Sciatic nerve (tissue), 2 donors: ENCODE measurements at regions of chr20 and their contacts with region 1.

Region 1: DNA sequence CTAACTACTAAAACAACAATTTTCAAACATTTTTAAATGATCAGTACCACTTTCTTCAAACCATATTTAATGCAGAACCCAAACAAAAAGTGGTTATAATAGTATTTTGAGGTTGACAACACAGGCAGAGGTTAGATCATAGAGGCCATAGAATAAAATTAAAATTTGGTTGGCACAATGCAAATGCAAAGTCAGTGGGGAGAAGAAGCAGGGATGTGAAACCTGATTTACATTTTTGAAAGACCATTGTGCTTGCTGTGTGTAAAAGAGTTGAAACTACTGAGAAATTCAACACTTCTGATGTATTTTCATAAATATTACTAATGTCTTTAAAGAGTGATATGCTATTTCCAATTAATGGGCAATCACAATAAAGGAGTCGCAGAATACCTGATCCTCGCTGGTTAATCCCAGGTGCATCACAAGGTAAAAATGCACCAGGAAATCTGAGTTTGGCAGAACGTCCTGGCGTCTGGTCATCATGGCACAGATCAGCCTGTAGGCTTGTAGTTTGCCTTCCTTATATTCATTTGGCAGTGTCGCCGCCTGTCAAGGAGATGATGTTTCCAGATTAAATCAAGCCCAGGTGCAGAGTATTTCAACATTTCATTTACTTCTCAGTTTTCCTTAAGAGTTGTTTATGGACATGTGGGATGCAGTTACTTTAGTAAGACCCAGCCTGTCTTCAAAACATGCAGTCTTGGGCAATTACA is 141.2 kb downstream of the RALGAPA2 start:
- DNase-seq: no peak
- ATAC-seq: no peak

Region 2: DNA sequence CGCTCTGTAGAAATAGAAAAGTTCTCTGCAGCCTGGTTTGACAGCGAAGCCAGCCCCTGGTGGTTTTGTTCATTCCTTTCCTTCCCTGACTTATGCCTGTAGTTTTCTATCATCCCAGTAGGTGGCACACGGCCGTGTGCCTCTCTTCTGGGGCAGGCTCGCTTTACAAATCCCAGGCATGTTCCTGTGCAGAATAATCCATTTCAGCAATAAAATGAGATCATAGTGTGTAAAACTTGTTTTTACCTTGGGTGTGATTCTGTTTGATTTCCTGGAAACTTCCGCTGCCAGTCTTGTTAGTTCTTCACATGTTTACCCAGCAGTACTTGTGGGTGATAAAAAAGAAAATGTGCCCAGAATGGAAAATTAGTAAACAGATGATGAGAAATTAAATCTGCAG is 210.8 kb before region 1 on chr20:
- intact Hi-C with region 1: loop called (anchors 5 kb)
- DNase-seq: no peak
- ATAC-seq: peak; percentile 73